ENCODE measurements at regions of chr3 and their contacts with region 1.

Region 1: GRCh38 chr3:73576999-73577461 is 47.7 kb downstream of the PDZRN3 start:
- DNase-seq: no peak
- ATAC-seq: no peak
- H3K4me3 ChIP-seq: no peak overlapping the region
- H3K27ac ChIP-seq: no peak overlapping the region
- H3K4me1 ChIP-seq: peaks cover 3 to 74% (median 23%) of the 10 kb centered on the region in 9 donors
- H3K27me3 ChIP-seq: no peaks in the 10 kb centered on the region
- CTCF ChIP-seq: no peak

Region 2: GRCh38 chr3:73530022-73530396 is 47.0 kb before region 1 on chr3:
- intact Hi-C with region 1: no loop called
- DNase-seq: no peak
- ATAC-seq: peak in 3 of 8 donors; percentile 4 to 26 (median 16)
- H3K4me3 ChIP-seq: no peak overlapping the region
- H3K27ac ChIP-seq: peak overlapping the region in 4 of 10 donors; percentile 11 to 54 (median 42)
- H3K4me1 ChIP-seq: peaks cover 0 to 54% (median 7%) of the 10 kb centered on the region in 9 donors
- H3K27me3 ChIP-seq: no peaks in the 10 kb centered on the region
- CTCF ChIP-seq: no peak

Region 3: DNA sequence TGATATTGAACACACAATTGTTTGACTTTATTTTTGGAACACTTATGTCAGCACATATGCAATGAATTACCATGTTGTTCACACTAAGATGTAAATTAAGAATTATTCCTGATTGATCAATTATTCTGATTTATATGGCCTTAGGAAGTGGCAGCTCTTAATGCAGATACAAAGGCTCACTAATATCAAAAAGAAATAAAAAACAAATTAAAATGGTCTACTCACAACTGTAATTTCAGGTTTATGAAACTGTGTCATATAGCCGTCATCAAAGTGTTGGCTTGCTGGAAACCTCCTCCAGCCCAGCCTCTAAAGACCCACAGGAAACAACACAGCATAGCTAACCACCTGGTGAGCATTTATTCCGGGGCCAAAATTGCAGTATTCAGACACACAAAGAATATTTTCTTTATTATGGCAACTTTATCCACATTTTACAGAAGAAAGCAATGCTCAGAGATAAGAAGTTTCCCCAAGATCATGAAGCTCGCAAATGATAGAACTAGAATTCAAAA is 14.3 kb after region 1 on chr3:
- intact Hi-C with region 1: loop called in 1 of 10 experiments (anchors 1 kb)
- DNase-seq: no peak
- ATAC-seq: no peak
- H3K4me3 ChIP-seq: no peak overlapping the region
- H3K27ac ChIP-seq: peak overlapping the region in 3 of 10 donors; percentile 6 to 27 (median 23)
- H3K4me1 ChIP-seq: peaks cover 0 to 63% (median 26%) of the 10 kb centered on the region in 9 donors
- H3K27me3 ChIP-seq: no peaks in the 10 kb centered on the region
- CTCF ChIP-seq: no peak

Measured in heart right ventricle (tissue), 16 donors.